ENCODE measurements at regions of chr1 and their contacts with region 1.

Region 1: DNA sequence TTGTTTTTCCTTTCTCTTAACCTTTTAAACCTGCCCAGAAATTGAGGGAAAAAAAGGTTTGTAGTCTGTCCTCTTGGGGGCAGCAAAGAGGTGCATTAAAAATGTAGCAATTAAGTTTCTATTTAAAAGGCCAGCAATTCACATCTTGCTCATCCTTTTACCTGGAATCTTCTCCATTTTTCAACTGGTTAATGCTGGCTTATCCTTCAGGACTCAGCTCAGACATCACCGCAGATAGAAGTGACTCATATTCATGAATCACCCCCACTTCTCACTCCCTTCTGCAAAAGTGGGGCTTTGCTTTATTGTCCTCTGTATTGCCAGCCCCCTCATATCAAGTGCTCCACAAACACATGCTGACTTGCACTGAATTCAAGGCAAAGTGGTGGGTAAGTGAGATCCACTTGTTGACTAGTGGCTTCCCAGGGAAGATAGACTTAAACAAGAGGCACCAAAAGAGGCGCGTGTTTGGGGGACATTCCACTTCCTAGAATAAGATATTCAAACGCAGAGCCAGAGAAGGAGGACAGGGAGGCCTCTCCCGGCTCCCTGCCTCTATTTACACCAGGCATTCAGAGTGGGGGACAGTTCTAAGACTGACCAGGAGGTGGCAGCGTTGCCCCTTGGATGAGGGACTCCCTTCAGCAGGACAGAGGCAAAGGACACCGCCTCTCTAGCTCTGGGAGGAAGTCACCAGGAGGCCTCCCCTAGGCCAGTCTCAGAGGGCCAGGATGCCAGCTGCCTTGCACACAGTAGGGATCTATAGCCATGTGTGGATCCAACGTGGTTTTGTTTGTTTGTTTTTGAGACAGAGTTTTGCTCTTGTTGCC is 23.2 kb upstream of the ZNF648 start:
- DNase-seq: peak; percentile 93
- H3K4me3 Mint-ChIP-seq: no peak overlapping the region
- H3K27ac Mint-ChIP-seq: peak overlapping the region; percentile 25
- H3K4me1 Mint-ChIP-seq: peaks cover 40% of the 10 kb centered on the region
- H3K27me3 Mint-ChIP-seq: no peaks in the 10 kb centered on the region

Region 2: DNA sequence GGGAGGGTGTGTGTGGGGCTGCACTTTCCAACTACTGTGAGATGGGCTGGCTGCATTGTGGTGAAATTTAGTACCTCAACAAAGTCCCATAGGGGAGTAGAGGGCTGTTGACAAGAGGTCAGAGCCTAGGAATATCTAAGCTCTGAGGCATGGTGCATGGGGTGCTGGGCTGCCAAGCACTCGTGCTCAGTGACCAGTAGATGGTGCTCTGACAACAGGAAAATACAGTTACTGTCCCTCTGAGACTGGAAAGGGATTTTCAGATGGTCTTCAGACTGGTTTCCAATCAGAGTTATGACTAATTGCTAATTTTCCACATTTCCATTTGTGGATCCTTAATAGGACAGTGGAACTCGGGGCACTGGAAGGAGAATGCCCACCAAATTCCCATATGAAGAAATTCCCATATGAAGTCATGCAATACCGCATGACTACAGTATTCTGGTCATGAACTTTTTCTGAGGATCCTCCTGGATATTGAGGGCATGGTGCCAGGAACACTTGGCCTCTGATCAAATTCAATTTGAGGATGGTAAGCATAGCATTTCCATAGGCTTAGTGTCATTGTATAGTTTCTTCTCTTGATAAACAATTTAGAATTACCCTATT is 605.5 kb before region 1 on chr1:
- CTCF ChIA-PET with region 1: interaction called, 11 read pairs
- intact Hi-C with region 1: loop called (anchors 1 kb)
- DNase-seq: peak; percentile 34
- H3K4me3 Mint-ChIP-seq: no peak overlapping the region
- H3K27ac Mint-ChIP-seq: no peak overlapping the region
- H3K4me1 Mint-ChIP-seq: peaks cover 10% of the 10 kb centered on the region
- H3K27me3 Mint-ChIP-seq: peaks cover 25% of the 10 kb centered on the region

Region 3: GRCh38 chr1:182069028-182069466 is 15.7 kb before region 1 on chr1:
- CTCF ChIA-PET with region 1: interaction called, 28 read pairs
- intact Hi-C with region 1: no loop called
- DNase-seq: peak; percentile 51
- H3K4me3 Mint-ChIP-seq: no peak overlapping the region
- H3K27ac Mint-ChIP-seq: no peak overlapping the region
- H3K4me1 Mint-ChIP-seq: peaks cover 3% of the 10 kb centered on the region
- H3K27me3 Mint-ChIP-seq: peaks cover 17% of the 10 kb centered on the region

Region 4: GRCh38 chr1:182301467-182302198 is 216.9 kb after region 1 on chr1:
- CTCF ChIA-PET with region 1: no interaction called
- intact Hi-C with region 1: loop called (anchors 1 kb)
- DNase-seq: peak; percentile 74
- H3K4me3 Mint-ChIP-seq: no peak overlapping the region
- H3K27ac Mint-ChIP-seq: peak overlapping the region; percentile 73
- H3K4me1 Mint-ChIP-seq: peaks cover 29% of the 10 kb centered on the region
- H3K27me3 Mint-ChIP-seq: no peaks in the 10 kb centered on the region

Region 5: GRCh38 chr1:182446033-182446669 is 361.4 kb after region 1 on chr1:
- CTCF ChIA-PET with region 1: no interaction called
- intact Hi-C with region 1: loop called (anchors 2 kb)
- DNase-seq: peak; percentile 59
- H3K4me3 Mint-ChIP-seq: no peak overlapping the region
- H3K27ac Mint-ChIP-seq: no peak overlapping the region
- H3K4me1 Mint-ChIP-seq: no peaks in the 10 kb centered on the region
- H3K27me3 Mint-ChIP-seq: no peaks in the 10 kb centered on the region

Region 6: DNA sequence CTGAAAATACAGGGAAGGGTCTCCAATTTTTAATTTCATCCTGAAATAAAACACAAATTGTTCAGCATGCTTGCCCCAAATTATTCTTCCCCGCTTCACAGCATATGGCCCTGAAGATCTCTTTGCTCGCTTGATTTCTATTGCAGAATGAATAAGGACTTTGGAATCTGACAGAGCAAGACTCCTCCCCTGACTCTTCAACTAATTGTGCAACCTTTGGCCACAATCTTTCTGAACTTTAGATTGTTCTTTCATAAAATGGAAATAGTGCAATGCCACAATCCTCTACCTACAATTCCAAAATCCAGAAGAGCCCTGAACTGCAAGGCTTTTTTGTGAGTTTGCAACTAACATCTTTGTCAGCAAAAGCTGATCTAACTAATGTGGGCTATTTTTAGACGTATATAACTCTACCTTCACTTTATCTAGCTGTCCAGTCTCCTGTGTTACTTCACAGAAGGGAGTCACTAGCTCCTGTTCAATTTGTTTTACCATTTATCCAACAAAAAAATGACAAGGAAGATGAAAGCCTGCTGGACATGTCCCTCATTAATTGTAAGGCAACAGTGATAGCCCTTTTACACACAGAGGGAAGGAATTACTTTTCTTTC is 490.9 kb after region 1 on chr1:
- CTCF ChIA-PET with region 1: no interaction called
- intact Hi-C with region 1: no loop called
- DNase-seq: no peak
- H3K4me3 Mint-ChIP-seq: no peak overlapping the region
- H3K27ac Mint-ChIP-seq: no peak overlapping the region
- H3K4me1 Mint-ChIP-seq: peaks cover 14% of the 10 kb centered on the region
- H3K27me3 Mint-ChIP-seq: no peaks in the 10 kb centered on the region

Region 7: GRCh38 chr1:182643706-182644105 is 559.0 kb after region 1 on chr1:
- CTCF ChIA-PET with region 1: no interaction called
- intact Hi-C with region 1: no loop called
- DNase-seq: no peak
- H3K4me3 Mint-ChIP-seq: no peak overlapping the region
- H3K27ac Mint-ChIP-seq: peak overlapping the region; percentile 33
- H3K4me1 Mint-ChIP-seq: no peaks in the 10 kb centered on the region
- H3K27me3 Mint-ChIP-seq: no peaks in the 10 kb centered on the region

Region 8: DNA sequence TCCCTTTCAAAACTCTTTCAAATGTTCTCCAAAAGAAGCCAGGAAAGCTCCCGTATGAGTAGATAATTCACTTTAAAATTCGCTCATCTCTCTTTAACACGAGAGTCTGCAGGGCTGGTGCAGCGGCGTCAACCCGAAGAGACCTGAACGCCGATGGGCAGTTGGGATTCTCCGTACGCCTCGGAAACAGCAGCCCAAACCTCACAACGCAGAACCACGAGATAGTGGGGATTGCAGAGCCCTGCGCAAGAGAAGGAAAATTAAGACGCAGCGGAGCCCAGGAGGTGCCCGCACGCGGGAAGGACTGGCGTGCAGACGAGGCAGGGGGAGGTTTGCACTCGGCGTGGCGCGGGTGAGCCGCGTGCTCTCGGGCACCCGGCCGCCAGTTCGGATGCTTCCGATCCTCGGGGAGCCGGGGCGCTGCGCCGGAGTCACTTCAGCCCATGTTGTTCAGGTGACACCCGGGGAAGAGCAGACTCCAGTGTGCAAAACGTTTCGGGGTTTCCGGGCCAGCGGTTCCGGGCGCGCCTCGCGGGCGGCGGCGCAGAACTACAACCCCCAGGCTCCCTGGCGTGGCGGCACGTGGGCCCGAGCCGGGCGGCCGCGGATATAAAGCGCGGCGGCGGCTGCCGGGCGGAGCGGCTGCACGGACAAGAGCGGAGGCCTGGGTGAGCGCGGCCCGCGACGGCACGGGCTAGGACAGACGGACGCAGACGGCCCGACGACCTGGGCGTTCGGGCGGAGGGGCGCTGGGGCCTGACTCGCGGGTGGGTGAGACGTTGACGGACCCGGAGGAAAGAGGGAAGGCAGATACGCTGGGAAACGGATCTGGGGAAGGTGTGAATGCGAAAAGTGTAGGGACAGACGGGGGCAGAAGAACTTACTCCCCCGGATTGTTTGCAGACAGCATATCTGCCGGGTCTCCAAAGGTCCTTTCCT is 704.7 kb after region 1 on chr1 and contains the start of gene NPL:
- CTCF ChIA-PET with region 1: no interaction called
- intact Hi-C with region 1: loop called (anchors 1 kb)
- DNase-seq: peak; percentile 85
- H3K4me3 Mint-ChIP-seq: peak within 1 kb of the TSS; percentile 81
- H3K27ac Mint-ChIP-seq: peak within 1 kb of the TSS; percentile 22
- H3K4me1 Mint-ChIP-seq: peaks cover 13% of the 10 kb centered on the region
- H3K27me3 Mint-ChIP-seq: no peaks in the 10 kb centered on the region
- total RNA-seq, gene NPL: 4.6 to 5.9 TPM